Thyroid gland (tissue), 4 donors: ENCODE measurements at regions of chr12 and their contacts with region 1.

Region 1: DNA sequence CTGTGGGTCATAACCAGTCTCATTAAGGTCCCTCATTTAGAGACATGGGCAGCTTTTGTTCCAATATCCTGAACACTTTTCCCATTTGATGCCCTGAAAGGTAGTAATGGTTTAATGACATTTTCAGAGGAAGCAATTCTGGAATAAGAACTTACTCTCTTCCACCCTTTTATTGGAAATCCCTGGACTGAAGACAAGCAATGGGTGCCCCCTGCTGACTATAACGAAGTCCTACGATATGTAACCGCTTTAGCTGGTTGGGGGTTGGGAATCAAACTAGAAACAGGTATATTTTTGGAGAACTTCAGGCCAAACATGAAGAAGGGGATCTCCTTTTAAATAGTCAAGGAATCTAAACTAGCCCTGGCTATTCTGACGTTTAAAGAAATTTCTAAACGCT is 20.5 kb downstream of the SARNP start:
- DNase-seq: peak; percentile 36 to 38
- H3K4me3 ChIP-seq: no peak overlapping the region
- H3K27ac ChIP-seq: no peak overlapping the region
- H3K4me1 ChIP-seq: no peaks in the 10 kb centered on the region
- H3K27me3 ChIP-seq: no peaks in the 10 kb centered on the region
- CTCF ChIP-seq: peak in 3 of 6 experiments; percentile 47 to 58 (median 51)
- POLR2A ChIP-seq: no peak

Region 2: DNA sequence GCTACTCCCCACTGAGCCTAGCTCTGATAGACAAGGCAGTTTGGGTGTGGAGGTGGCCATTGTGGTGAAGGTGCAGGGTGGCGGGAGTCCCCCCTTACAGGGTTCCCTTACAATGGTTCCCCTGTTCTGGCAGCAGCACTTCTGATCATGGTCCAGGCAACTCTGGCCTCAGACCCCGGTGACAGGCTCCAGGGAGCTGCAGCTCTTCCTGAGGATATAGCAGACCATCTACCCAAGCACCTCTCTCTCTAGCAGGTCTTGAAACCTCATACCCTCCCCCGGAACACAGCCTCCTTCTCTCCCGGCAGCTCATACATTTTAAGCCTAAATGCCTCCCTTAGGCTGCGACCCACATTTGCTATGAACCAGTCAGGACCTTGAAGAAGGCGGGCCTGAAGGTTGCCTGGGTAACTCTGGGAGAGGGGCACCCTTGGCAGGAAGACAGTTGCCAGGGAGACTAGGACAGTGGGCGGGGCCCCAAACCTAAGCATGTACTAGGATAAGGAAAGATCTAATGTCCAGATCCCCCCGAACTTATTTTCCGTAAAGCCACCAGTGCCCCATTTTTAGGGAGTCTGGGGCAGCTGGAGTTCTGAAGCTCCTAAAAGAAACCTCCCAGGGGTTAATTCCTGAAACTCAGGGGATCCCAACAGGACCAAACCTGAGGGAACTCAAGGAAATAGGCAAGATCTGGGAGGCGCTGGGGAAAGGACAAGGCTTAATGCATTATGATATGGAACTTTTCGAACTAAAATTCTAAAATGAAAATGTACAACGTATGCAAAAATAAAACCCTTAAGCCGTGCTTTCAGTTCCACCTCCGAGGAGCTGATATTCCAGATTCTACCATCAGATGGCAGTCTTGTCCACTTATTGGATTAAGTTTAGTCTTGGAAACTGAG is 58.7 kb before region 1 on chr12:
- intact Hi-C with region 1: loop called (anchors 5 kb)
- DNase-seq: peak; percentile 90 to 92
- H3K4me3 ChIP-seq: peak overlapping the region in 2 of 3 donors; percentile 29 to 66
- H3K27ac ChIP-seq: peak overlapping the region; percentile 69 to 82 (median 72)
- H3K4me1 ChIP-seq: peaks cover 9 to 24% of the 10 kb centered on the region in 2 donors
- H3K27me3 ChIP-seq: no peaks in the 10 kb centered on the region
- CTCF ChIP-seq: peak; percentile 81 to 98 (median 88)
- POLR2A ChIP-seq: peak in 1 of 2 donors; percentile 16